Dorsolateral prefrontal cortex (tissue), 120 donors: ENCODE measurements at regions of chr13 and their contacts with region 1.

Region 1: DNA sequence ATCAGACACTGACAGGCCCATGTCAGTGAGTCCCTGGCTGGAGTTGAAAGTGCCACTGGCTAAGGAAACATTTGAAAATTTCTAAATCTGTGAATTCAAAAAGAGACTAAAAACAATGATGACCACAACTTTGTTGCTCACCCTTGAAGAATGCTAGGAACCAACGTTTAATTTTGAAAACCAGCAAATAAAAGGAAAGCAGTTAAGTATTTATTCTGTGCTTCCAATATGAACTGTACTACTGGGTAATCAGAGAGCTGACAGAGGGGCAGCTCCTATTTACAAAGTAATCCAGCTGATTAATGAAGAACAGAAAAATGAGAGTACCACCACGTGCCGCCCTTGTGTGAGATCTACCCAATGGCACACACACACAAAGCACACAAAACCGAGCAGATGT is 44.7 kb upstream of the LATS2 start:
- DNase-seq: no peak
- H3K4me3 ChIP-seq: no peak overlapping the region
- H3K27ac ChIP-seq: no peak overlapping the region
- H3K27me3 ChIP-seq: no peaks in the 10 kb centered on the region
- CTCF ChIP-seq: no peak

Region 2: GRCh38 chr13:20969182-20969581 is 136.9 kb before region 1 on chr13:
- intact Hi-C with region 1: loop called in 1 of 2 experiments (anchors 10 kb)
- DNase-seq: no peak
- H3K4me3 ChIP-seq: no peak overlapping the region
- H3K27ac ChIP-seq: no peak overlapping the region
- H3K27me3 ChIP-seq: peaks cover 0 to 4% (median 0%) of the 10 kb centered on the region in 45 donors
- CTCF ChIP-seq: no peak